PC-9 (cell line): ENCODE measurements at regions of chr18 and their contacts with region 1.

Region 1: DNA sequence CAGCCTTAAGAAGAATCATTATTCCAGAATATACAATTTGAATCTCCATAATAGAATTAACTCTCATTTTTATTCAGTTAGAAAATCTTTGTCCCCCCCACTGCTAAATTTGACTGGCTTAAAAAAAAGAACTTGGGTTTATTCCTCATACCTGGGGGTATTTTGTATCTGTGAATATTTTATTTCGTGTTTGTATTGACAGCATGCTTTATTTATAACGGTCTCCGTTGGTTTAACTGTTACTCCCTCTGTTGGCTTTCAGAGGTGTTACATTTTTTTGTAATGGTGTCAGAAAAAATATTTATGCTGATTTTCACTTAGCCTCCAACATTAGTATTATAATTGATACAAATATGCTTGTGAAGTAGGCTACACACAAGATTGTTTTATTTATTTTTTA is 109.1 kb downstream of the HAUS1 start:
- DNase-seq: no peak
- H3K4me3 ChIP-seq: no peak overlapping the region
- H3K27ac ChIP-seq: no peak overlapping the region
- H3K4me1 ChIP-seq: peaks cover 16% of the 10 kb centered on the region
- H3K27me3 ChIP-seq: no peaks in the 10 kb centered on the region
- CTCF ChIP-seq: peak; percentile 76

Region 2: GRCh38 chr18:45896991-45897390 is 316.3 kb before region 1 on chr18:
- CTCF ChIA-PET with region 1: no interaction called
- POLR2A ChIA-PET with region 1: no interaction called
- intact Hi-C with region 1: no loop called
- DNase-seq: no peak
- H3K4me3 ChIP-seq: no peak overlapping the region
- H3K27ac ChIP-seq: no peak overlapping the region
- H3K4me1 ChIP-seq: no peaks in the 10 kb centered on the region
- H3K27me3 ChIP-seq: no peaks in the 10 kb centered on the region
- CTCF ChIP-seq: no peak

Region 3: DNA sequence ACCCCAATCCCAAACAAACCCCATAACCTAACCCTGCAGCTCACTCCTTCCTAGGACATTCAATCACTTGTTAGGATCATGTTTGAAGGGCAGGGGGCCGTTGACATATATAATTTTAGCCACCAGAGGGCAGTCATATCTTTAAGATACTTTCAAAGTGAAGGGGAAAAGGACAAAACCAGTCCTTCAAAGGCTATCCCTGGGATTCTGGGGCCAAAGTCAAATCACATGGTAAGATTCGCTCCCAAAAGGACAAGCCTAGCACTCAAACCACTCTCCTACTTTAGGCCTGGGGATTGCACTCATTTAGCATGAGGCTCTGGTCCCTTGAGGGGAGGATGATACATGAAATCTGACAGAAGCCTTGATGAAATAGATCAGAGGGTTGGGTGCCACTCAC is 64.5 kb before region 1 on chr18:
- CTCF ChIA-PET with region 1: no interaction called
- POLR2A ChIA-PET with region 1: no interaction called
- intact Hi-C with region 1: loop called (anchors 2 kb)
- DNase-seq: peak; percentile 34 to 66
- H3K4me3 ChIP-seq: no peak overlapping the region
- H3K27ac ChIP-seq: peak overlapping the region; percentile 61; the same call in 1 of the 2 replicates
- H3K4me1 ChIP-seq: peaks cover 48% of the 10 kb centered on the region
- H3K27me3 ChIP-seq: no peaks in the 10 kb centered on the region
- CTCF ChIP-seq: peak; percentile 87

Region 4: DNA sequence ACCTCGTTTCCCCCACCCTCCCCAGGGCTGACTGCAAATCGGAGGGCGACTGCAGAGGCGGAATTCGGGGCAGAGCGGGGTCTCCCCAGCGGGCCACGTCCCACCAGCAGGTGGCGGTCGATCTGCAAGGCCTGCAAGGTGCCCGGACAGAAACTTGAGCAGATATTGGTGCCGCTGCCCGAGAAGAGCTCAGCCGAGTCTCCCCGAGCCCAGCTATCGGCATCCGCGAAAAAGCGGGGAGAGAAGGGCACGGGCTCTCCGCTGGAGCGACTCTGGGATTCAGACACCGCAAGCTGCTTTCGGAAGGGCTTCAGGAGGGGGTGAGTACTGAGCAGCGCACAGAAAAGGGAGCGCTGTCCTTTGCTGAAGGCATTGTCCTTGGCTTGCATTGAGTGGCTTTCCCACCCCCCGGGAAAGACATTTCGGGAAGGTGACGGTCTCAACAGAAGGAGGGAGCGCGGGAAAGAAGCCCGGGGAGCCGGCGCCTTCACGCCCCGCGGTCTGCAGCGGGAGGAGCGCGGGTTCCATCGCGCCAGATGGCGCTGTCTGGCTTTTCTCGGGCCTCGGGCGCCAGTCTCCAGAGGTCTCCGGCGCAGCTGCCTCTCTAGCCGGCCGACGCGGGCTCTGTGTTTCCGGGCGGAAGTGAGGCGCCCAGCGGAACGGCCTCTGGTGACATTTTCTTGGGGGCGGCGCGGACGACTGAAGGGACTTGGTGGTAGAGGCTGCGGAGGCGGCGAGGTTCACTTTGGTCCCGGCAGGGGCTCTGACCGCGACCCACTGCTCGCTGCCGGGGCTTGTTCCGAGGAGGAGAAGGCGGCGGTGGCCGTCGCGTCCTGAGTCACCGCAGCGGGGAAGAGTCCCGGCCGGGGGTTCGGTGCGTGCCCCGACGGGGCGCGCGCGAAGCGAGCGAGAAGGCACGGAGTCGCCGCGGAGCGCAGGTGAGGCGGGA is 39.6 kb before region 1 on chr18:
- CTCF ChIA-PET with region 1: interaction called, 10 read pairs
- POLR2A ChIA-PET with region 1: interaction called, 23 read pairs
- intact Hi-C with region 1: no loop called
- DNase-seq: peak; percentile 82 to 83
- H3K4me3 ChIP-seq: peak overlapping the region; percentile 98
- H3K27ac ChIP-seq: peak overlapping the region; percentile 78
- H3K4me1 ChIP-seq: peaks cover 34% of the 10 kb centered on the region
- H3K27me3 ChIP-seq: no peaks in the 10 kb centered on the region
- CTCF ChIP-seq: peak; percentile 91

Region 5: GRCh38 chr18:46182633-46183358 is 30.5 kb before region 1 on chr18:
- CTCF ChIA-PET with region 1: no interaction called
- POLR2A ChIA-PET with region 1: interaction called, 31 read pairs
- intact Hi-C with region 1: no loop called
- DNase-seq: peak in 1 of 2 experiments; percentile 39
- H3K4me3 ChIP-seq: no peak overlapping the region
- H3K27ac ChIP-seq: peak overlapping the region; percentile 47; the same call in 1 of the 2 replicates
- H3K4me1 ChIP-seq: peaks cover 20% of the 10 kb centered on the region
- H3K27me3 ChIP-seq: no peaks in the 10 kb centered on the region
- CTCF ChIP-seq: no peak

Region 6: GRCh38 chr18:46250084-46250811 is 37.0 kb after region 1 on chr18:
- CTCF ChIA-PET with region 1: no interaction called
- POLR2A ChIA-PET with region 1: no interaction called
- intact Hi-C with region 1: no loop called
- DNase-seq: peak; percentile 60 to 98
- H3K4me3 ChIP-seq: peak overlapping the region; percentile 27; the same call in 1 of the 2 replicates
- H3K27ac ChIP-seq: peak overlapping the region; percentile 84
- H3K4me1 ChIP-seq: peaks cover 50% of the 10 kb centered on the region
- H3K27me3 ChIP-seq: no peaks in the 10 kb centered on the region
- CTCF ChIP-seq: no peak